MCF 10A (cell line): ENCODE measurements at regions of chr11 and their contacts with region 1.

Region 1: GRCh38 chr11:102573851-102574250 is 43.3 kb upstream of the MMP7 start:
- DNase-seq: peak; percentile 62
- H3K4me3 Mint-ChIP-seq: no peak overlapping the region
- H3K27ac Mint-ChIP-seq: no peak overlapping the region
- H3K4me1 Mint-ChIP-seq: no peaks in the 10 kb centered on the region
- H3K27me3 Mint-ChIP-seq: no peaks in the 10 kb centered on the region
- CTCF ChIP-seq: no peak

Region 2: DNA sequence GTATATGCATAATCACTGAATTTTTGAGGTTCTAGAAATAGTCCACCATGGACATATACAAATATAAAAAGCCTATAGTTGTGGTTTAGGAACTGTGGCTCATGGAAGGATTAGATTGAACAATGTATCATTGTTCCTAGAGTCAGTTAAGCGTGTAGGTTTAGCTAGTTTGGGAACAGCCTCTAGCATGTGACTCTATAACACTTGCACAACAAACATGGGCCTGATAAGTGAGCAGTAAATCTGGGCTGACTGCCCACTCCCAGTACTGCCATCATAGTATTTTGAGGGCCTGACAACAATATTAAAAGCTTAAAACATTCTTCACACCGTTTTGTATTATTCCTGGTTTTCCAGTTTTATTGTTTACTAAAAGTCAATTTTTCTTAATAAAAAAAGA is 416.6 kb before region 1 on chr11:
- CTCF ChIA-PET with region 1: no interaction called
- POLR2A ChIA-PET with region 1: no interaction called
- intact Hi-C with region 1: no loop called
- DNase-seq: peak; percentile 87
- H3K4me3 Mint-ChIP-seq: no peak overlapping the region
- H3K27ac Mint-ChIP-seq: peak overlapping the region; percentile 39
- H3K4me1 Mint-ChIP-seq: peaks cover 48% of the 10 kb centered on the region
- H3K27me3 Mint-ChIP-seq: no peaks in the 10 kb centered on the region
- CTCF ChIP-seq: no peak

Region 3: GRCh38 chr11:102553835-102554282 is 20.0 kb before region 1 on chr11:
- CTCF ChIA-PET with region 1: no interaction called
- POLR2A ChIA-PET with region 1: interaction called, 15 read pairs
- intact Hi-C with region 1: no loop called
- DNase-seq: peak; percentile 46
- H3K4me3 Mint-ChIP-seq: no peak overlapping the region
- H3K27ac Mint-ChIP-seq: peak overlapping the region; percentile 37
- H3K4me1 Mint-ChIP-seq: peaks cover 32% of the 10 kb centered on the region
- H3K27me3 Mint-ChIP-seq: no peaks in the 10 kb centered on the region
- CTCF ChIP-seq: no peak

Region 4: GRCh38 chr11:102592634-102593581 is 19.1 kb after region 1 on chr11:
- CTCF ChIA-PET with region 1: interaction called, 11 read pairs
- POLR2A ChIA-PET with region 1: interaction called, 3 read pairs
- intact Hi-C with region 1: no loop called
- DNase-seq: peak; percentile 63
- H3K4me3 Mint-ChIP-seq: no peak overlapping the region
- H3K27ac Mint-ChIP-seq: no peak overlapping the region
- H3K4me1 Mint-ChIP-seq: no peaks in the 10 kb centered on the region
- H3K27me3 Mint-ChIP-seq: no peaks in the 10 kb centered on the region
- CTCF ChIP-seq: peak; percentile 50